ENCODE measurements at regions of chr2 and their contacts with region 1.

Region 1: DNA sequence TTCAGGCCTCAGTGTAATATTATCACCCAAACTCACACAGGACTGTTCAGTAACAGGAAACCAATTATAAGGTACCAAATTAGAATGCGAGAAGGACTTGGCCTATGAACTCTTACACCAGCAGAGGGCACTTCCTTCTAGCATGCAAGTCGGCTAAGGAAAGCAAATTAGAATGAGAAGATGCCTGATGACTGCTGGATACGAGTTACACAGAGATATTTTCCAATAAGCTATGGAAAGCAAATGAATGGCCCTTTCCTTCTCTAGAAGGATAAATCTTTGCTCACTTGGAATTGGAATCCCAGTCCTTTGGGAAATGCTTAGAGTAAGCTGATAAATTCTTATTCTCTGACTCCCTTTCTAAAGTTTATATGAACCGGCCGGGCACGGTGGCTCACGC is 109.8 kb downstream of the AP1S3 start:
- DNase-seq: peak; percentile 70
- CTCF ChIP-seq: peak; percentile 75

Region 2: GRCh38 chr2:223744573-223744972 is 17.0 kb after region 1 on chr2:
- CTCF ChIA-PET with region 1: interaction called, 11 read pairs
- POLR2A ChIA-PET with region 1: no interaction called
- DNase-seq: no peak
- CTCF ChIP-seq: no peak

Region 3: GRCh38 chr2:223797811-223798721 is 70.5 kb after region 1 on chr2:
- CTCF ChIA-PET with region 1: interaction called, 30 read pairs
- POLR2A ChIA-PET with region 1: no interaction called
- DNase-seq: peak; percentile 74
- CTCF ChIP-seq: peak; percentile 45

Measured in GM10248 (cell line).